ENCODE measurements at regions of chr14 and their contacts with region 1.

Region 1: DNA sequence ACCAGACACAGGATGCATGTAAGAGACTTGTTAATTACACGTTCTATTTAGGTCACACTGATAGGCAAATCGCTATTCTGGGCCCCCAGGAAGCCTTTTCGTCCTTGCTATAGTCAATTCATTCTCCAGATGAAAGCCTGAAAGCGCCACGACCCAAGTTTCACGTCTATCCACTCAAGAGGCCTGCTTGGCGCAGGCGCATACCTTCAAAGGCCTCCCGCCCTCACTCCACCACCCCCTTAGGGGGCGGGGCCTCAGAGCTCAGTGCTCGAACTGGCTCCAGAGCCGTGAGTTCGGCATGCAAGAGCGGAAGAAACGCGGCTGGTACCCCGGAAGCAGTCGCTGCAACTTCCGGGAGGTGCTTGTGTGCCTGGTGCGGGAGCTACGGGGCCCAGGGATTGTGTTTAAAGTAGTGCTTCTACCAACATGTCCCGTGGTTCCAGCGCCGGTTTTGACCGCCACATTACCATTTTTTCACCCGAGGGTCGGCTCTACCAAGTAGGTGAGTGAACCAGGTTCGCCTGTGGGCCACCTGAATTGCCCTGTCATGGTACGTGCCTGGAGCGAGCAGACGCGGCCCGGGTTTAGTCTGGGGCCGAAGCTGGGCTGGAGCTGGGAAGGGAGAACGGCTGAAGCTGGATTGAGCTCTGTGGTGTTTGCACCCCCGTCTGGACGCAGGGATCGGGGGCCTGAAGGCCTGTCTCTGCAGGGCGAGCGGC is at the start of gene PSMA6:
- DNase-seq: peak; percentile 93 to 99
- ATAC-seq: peak; percentile 97 to 100
- H3K4me3 ChIP-seq: peak within 1 kb of the TSS; percentile 76
- H3K27ac ChIP-seq: peak within 1 kb of the TSS; percentile 91 to 92
- H3K4me1 ChIP-seq: peaks cover 40% of the 10 kb centered on the region
- CTCF ChIP-seq: no peak
- EP300 ChIP-seq: no peak
- POLR2A ChIP-seq: peak; percentile 34
- RAD21 ChIP-seq: no peak
- polyA plus RNA-seq, gene PSMA6: 321 and 369 TPM in 2 replicates

Region 2: GRCh38 chr14:35046048-35046741 is 246.0 kb before region 1 on chr14 and contains the start of gene FAM177A1:
- CTCF ChIA-PET with region 1: no interaction called
- POLR2A ChIA-PET with region 1: interaction called, 12 read pairs
- DNase-seq: peak; percentile 96 to 98
- ATAC-seq: peak; percentile 93 to 97
- H3K4me3 ChIP-seq: peak within 1 kb of the TSS; percentile 82
- H3K27ac ChIP-seq: peak within 1 kb of the TSS; percentile 92 to 93
- H3K4me1 ChIP-seq: peaks cover 42% of the 10 kb centered on the region
- CTCF ChIP-seq: no peak
- EP300 ChIP-seq: no peak
- POLR2A ChIP-seq: peak; percentile 87
- RAD21 ChIP-seq: peak in 1 of 2 experiments; percentile 7; a peak in 1 of 5 replicates
- polyA plus RNA-seq, gene FAM177A1: 79.8 and 102 TPM in 2 replicates

Region 3: DNA sequence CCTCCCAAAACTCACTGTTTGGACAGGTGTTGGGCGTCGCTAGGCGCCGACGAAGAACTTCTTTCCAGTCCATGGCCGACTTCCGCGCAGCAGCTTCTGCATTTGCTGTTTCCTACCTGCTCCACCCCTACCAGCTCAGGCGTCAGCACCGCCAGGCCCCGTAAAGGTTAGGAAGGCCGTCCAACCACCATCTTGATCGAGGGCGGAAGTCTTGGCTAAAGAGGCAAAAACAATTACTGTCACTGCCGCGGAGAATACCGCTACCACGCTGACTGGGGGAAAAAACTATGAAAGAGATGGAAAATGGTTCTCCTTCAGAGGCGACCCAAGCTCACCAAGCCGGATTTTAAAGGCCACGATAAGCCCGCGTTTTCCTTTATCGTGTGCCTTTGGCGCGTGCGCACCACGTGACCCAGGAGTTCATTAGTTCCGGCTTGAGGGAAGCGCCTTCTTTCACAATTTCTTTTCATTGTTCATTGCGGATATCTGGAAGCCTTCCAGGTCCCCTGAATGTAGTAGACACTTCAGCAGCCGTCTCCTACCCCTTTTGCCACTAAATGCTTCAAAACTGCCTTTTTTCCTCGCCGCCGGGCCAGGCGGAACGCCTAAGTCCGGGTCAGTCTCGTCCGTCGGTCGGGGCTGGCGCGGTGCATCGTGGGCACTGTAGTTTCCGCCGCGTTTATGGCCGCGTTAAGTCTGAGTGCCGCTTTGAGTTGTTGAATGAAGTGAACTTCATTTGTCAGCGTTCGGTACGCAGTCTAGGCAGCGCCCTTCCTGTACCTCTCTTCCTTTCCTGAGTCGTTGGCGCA is 170.1 kb before region 1 on chr14 and contains the starts of genes PPP2R3C and PRORP:
- CTCF ChIA-PET with region 1: no interaction called
- POLR2A ChIA-PET with region 1: interaction called, 13 read pairs
- DNase-seq: peak; percentile 74 to 99
- ATAC-seq: peak; percentile 94 to 96
- H3K4me3 ChIP-seq: peak within 1 kb of the TSS; percentile 90
- H3K27ac ChIP-seq: peak within 1 kb of the TSS; percentile 97 to 99
- H3K4me1 ChIP-seq: peaks cover 11% of the 10 kb centered on the region; the same call in 1 of the 3 replicates
- CTCF ChIP-seq: no peak
- EP300 ChIP-seq: no peak
- POLR2A ChIP-seq: peak; percentile 26; the same call in 1 of the 2 replicates
- RAD21 ChIP-seq: no peak
- polyA plus RNA-seq, gene PPP2R3C: 24.1 and 32.1 TPM in 2 replicates
- polyA plus RNA-seq, gene PRORP: 38.8 and 40.0 TPM in 2 replicates

Region 4: DNA sequence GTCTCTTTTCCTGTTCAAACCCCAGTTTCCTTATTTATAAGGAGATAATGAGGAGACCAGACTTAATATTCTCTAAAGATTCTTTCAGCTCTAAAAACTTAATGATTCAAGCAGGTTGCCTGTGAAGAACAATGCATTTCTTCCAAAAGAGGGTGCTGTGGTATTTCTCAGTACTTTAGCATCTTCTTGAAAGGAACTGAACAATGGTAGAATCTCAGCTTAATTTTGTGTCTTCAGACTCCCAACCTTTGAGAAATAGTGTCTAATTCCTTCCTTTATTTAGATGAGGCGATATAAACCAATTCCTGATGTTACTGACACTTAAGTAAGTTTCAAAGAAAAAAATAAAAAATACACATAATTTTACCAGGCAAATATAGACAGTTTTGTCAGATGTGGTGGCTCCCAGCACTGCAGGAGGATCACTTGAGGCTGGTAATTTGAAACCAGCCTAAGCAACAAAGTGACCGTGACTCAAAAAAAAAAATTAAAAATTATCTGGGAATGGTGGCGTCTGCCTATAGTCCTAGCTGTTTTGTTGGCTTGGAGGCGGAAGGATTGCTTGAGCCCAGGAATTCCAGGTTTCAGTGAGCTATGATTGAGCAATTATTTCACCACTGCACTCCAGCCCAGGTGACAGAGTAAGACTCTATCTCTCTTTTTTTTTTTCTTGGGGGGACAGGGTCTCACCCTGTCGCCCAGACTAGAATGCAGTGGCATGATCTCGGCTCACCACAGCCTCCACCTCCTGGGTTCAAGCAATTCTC is 76.9 kb before region 1 on chr14:
- CTCF ChIA-PET with region 1: interaction called, 11 read pairs
- POLR2A ChIA-PET with region 1: interaction called, 8 read pairs
- DNase-seq: peak; percentile 36 to 69
- ATAC-seq: peak; percentile 66 to 88; a peak in 4 of 6 replicates
- H3K4me3 ChIP-seq: no peak overlapping the region
- H3K27ac ChIP-seq: peak overlapping the region; percentile 69 to 75; a peak in 5 of 6 replicates
- H3K4me1 ChIP-seq: peaks cover 33% of the 10 kb centered on the region
- CTCF ChIP-seq: peak; percentile 73
- EP300 ChIP-seq: no peak
- POLR2A ChIP-seq: no peak
- RAD21 ChIP-seq: peak; percentile 77 to 81

Region 5: DNA sequence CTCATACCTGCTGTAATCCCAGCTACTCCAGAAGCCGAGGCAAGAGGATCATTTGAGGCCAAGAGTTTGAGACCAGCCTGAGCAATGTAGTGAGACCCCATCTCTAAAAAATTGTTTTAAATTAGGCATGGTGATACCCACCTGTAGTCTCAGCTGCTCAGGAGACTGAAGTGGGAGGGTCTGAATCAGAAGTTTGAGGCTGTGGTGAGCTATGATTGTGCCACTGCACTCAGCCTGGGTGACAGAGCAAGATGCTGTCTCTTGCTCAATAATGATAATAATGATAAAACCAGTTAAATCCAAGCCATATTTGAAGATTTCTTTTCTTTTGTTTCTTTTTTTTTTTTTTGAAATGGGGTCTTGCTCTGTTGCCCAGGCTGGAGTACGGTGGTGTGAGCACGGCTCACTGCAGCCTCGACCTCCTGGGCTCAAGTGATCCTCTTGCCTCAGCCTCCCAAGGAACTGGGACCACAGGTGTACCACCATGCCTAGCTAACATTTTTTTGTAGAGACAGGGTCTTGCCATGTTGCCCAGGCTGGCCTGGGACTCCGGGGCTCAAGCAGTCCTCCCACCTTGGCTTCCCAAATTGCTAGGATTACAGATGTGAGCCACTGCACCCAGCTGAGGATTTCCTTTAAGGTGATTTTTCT is 12.7 kb after region 1 on chr14:
- CTCF ChIA-PET with region 1: interaction called, 6 read pairs
- POLR2A ChIA-PET with region 1: interaction called, 12 read pairs
- DNase-seq: no peak
- ATAC-seq: no peak
- H3K4me3 ChIP-seq: no peak overlapping the region
- H3K27ac ChIP-seq: no peak overlapping the region
- H3K4me1 ChIP-seq: no peaks in the 10 kb centered on the region
- CTCF ChIP-seq: no peak
- EP300 ChIP-seq: no peak
- POLR2A ChIP-seq: no peak
- RAD21 ChIP-seq: no peak

Region 6: GRCh38 chr14:35341446-35342159 is 49.4 kb after region 1 on chr14:
- CTCF ChIA-PET with region 1: no interaction called
- POLR2A ChIA-PET with region 1: interaction called, 11 read pairs
- DNase-seq: peak; percentile 87 to 93
- ATAC-seq: peak; percentile 92 to 95
- H3K4me3 ChIP-seq: peak overlapping the region; percentile 30; the same call in 2 of the 3 replicates
- H3K27ac ChIP-seq: peak overlapping the region; percentile 91 to 95
- H3K4me1 ChIP-seq: peaks cover 50% of the 10 kb centered on the region
- CTCF ChIP-seq: no peak
- EP300 ChIP-seq: no peak
- POLR2A ChIP-seq: peak; percentile 63
- RAD21 ChIP-seq: peak in 1 of 2 experiments; percentile 19; a peak in 2 of 5 replicates

Region 7: GRCh38 chr14:35385042-35385839 is 93.0 kb after region 1 on chr14:
- CTCF ChIA-PET with region 1: interaction called, 3 read pairs
- POLR2A ChIA-PET with region 1: interaction called, 10 read pairs
- DNase-seq: peak; percentile 56 to 89
- ATAC-seq: peak; percentile 84 to 87
- H3K4me3 ChIP-seq: no peak overlapping the region
- H3K27ac ChIP-seq: peak overlapping the region; percentile 89 to 97
- H3K4me1 ChIP-seq: peaks cover 47% of the 10 kb centered on the region
- CTCF ChIP-seq: no peak
- EP300 ChIP-seq: peak in 1 of 2 experiments; percentile 62; a peak in 2 of 5 replicates
- POLR2A ChIP-seq: no peak
- RAD21 ChIP-seq: no peak

Region 8: DNA sequence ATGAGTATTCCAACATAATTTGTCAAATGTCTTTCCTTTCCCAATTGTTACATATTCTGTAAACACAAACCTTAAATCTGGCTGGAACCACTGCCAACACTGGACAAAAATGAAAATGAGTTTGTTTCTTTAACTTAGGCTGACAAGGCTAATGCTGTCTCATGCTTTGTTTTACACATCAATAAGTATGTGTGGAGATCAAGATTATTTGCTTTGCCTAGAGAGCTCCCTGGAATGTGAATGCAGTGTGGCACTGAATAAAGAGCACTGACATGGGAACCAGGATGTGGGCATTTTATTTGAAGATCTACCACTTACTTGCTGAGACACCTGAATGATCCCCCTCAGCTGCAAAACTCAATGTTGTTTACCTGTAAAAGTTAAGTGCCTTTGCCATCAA is 455.2 kb after region 1 on chr14:
- CTCF ChIA-PET with region 1: no interaction called
- POLR2A ChIA-PET with region 1: no interaction called
- DNase-seq: peak in 1 of 2 experiments; percentile 40
- ATAC-seq: peak in 1 of 2 experiments; percentile 66; a peak in 3 of 6 replicates
- H3K4me3 ChIP-seq: no peak overlapping the region
- H3K27ac ChIP-seq: no peak overlapping the region
- H3K4me1 ChIP-seq: peaks cover 9% of the 10 kb centered on the region; the same call in 2 of the 3 replicates
- CTCF ChIP-seq: no peak
- EP300 ChIP-seq: no peak
- POLR2A ChIP-seq: no peak
- RAD21 ChIP-seq: no peak

Measured in A549 (cell line).